CD8-positive, alpha-beta T cell (primary cell): ENCODE measurements at regions of chr7 and their contacts with region 1.

Region 1: GRCh38 chr7:150356265-150356897 is 12.2 kb upstream of the REPIN1 start:
- DNase-seq: peak in 2 of 9 experiments; percentile 73 to 79
- ATAC-seq: no peak
- H3K4me3 ChIP-seq: no peak overlapping the region
- H3K4me3 Mint-ChIP-seq: peak overlapping the region; percentile 18
- H3K27ac ChIP-seq: no peak overlapping the region
- H3K27ac Mint-ChIP-seq: peak overlapping the region; percentile 46
- H3K4me1 ChIP-seq: peaks cover 37% of the 10 kb centered on the region
- H3K4me1 Mint-ChIP-seq: peaks cover 39% of the 10 kb centered on the region
- H3K27me3 ChIP-seq: peaks cover 0 to 7% of the 10 kb centered on the region in 2 experiments
- H3K27me3 Mint-ChIP-seq: no peaks in the 10 kb centered on the region
- CTCF ChIP-seq: peak; percentile 78

Region 2: DNA sequence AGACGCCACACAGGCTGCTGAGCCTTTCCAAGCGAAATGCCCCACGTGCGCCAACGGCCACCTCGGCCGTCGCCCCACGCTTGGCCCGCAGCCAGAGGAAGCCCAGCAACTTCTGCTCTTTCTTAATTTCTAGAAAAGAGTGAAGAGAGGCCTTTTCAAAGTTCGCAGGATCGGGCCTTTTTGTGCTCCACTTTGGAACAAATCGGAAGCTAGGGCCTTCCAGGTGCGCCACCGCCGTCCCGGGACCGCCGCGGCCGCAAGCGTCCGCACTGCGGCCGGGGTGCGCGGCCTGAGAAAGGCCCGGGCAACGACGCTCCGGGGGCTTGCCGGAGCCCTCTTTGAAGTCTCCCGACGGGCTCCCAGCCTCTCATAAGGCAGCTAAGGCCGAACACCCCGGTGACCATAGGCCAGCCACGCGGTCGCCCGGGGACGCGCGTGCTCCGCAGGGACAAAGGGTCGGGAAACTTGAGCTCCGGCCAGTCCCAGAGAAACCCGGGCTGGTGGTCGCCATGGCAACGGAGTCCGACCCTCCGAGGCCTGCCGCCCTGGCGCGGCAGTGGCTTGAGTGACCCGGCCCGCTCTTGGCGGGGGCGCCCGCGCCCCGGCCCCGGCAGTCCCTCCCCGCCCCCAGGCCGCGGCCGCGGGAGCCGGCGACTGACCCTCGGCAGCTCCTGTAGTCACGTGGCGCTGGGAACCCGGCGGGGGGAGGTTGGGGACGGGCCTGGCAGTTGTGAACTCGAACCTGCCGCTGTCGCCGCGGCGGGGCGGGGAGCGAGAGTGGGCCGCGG is 11.9 kb after region 1 on chr7 and contains the start of gene REPIN1:
- CTCF ChIA-PET with region 1: interaction called, 31 read pairs
- POLR2A ChIA-PET with region 1: interaction called, 20 read pairs
- intact Hi-C with region 1: loop called (anchors 1 kb)
- DNase-seq: peak; percentile 52 to 90 (median 85)
- ATAC-seq: no peak
- H3K4me3 ChIP-seq: peak within 1 kb of the TSS; percentile 78 to 95
- H3K4me3 Mint-ChIP-seq: peak within 1 kb of the TSS; percentile 95
- H3K27ac ChIP-seq: peak within 1 kb of the TSS; percentile 53 to 73
- H3K27ac Mint-ChIP-seq: peak within 1 kb of the TSS; percentile 95
- H3K4me1 ChIP-seq: peaks cover 47% of the 10 kb centered on the region
- H3K4me1 Mint-ChIP-seq: peaks cover 58% of the 10 kb centered on the region
- H3K27me3 ChIP-seq: no peaks in the 10 kb centered on the region
- H3K27me3 Mint-ChIP-seq: no peaks in the 10 kb centered on the region
- CTCF ChIP-seq: no peak
- total RNA-seq, gene REPIN1: 54.0 to 54.1 TPM

Region 3: DNA sequence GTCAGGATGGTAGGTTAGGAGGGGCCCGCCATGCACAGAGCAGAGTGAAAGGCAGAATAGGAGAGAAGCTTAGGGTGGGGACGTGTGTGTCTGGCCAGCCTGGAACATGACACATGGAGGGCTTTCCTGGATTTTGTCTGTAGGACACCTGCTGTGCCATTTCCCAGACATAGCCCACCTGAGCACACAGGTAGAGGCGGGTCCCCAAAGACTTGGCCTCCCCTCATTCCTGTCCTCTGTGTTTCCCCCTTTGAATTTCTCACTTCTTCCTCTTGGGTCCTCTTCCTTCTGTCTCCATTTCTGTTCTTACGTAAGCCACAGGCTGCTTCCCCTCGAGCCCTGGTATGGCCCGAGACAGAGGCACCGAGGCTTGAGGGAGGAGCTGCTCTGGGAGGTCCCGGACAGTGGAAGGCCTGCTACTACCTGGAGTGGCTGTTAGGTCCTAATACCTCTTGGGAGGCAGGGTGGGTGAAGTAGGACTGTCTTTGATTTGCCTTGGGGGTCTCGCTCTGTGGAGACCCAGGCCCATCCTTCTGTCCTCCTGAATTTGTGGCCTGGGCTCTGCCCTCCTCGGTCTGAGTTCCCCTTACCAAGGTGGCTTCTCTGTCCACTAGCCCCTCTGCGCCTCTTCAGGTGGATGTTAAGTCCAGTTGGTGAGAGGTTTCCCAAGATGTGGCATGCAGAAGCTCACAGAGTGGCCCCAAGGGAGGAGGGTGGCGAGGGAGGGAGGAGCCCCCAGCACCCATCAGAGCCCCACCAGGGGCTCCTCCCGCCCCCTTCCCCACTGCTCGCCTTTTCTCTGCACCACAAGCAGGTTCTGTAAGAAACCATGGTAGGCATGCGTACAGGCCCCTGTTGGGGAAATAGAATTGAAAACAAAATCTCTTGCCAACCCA is 28.3 kb after region 1 on chr7:
- CTCF ChIA-PET with region 1: interaction called, 11 read pairs
- POLR2A ChIA-PET with region 1: no interaction called
- intact Hi-C with region 1: loop called in 1 of 2 experiments (anchors 1 kb)
- DNase-seq: no peak
- ATAC-seq: no peak
- H3K4me3 ChIP-seq: no peak overlapping the region
- H3K4me3 Mint-ChIP-seq: no peak overlapping the region
- H3K27ac ChIP-seq: no peak overlapping the region
- H3K27ac Mint-ChIP-seq: no peak overlapping the region
- H3K4me1 ChIP-seq: peaks cover 8% of the 10 kb centered on the region
- H3K4me1 Mint-ChIP-seq: peaks cover 18% of the 10 kb centered on the region
- H3K27me3 ChIP-seq: no peaks in the 10 kb centered on the region
- H3K27me3 Mint-ChIP-seq: no peaks in the 10 kb centered on the region
- CTCF ChIP-seq: no peak

Region 4: GRCh38 chr7:150404805-150405583 is 48.6 kb after region 1 on chr7:
- CTCF ChIA-PET with region 1: interaction called, 28 read pairs
- POLR2A ChIA-PET with region 1: interaction called, 8 read pairs
- intact Hi-C with region 1: loop called (anchors 1 kb)
- DNase-seq: peak; percentile 61 to 91 (median 76)
- ATAC-seq: peak; percentile 81
- H3K4me3 ChIP-seq: peak overlapping the region; percentile 86 to 88
- H3K4me3 Mint-ChIP-seq: peak overlapping the region; percentile 94
- H3K27ac ChIP-seq: peak overlapping the region; percentile 80 to 93
- H3K27ac Mint-ChIP-seq: peak overlapping the region; percentile 100
- H3K4me1 ChIP-seq: peaks cover 30% of the 10 kb centered on the region
- H3K4me1 Mint-ChIP-seq: peaks cover 39% of the 10 kb centered on the region
- H3K27me3 ChIP-seq: no peaks in the 10 kb centered on the region
- H3K27me3 Mint-ChIP-seq: no peaks in the 10 kb centered on the region
- CTCF ChIP-seq: no peak

Region 5: DNA sequence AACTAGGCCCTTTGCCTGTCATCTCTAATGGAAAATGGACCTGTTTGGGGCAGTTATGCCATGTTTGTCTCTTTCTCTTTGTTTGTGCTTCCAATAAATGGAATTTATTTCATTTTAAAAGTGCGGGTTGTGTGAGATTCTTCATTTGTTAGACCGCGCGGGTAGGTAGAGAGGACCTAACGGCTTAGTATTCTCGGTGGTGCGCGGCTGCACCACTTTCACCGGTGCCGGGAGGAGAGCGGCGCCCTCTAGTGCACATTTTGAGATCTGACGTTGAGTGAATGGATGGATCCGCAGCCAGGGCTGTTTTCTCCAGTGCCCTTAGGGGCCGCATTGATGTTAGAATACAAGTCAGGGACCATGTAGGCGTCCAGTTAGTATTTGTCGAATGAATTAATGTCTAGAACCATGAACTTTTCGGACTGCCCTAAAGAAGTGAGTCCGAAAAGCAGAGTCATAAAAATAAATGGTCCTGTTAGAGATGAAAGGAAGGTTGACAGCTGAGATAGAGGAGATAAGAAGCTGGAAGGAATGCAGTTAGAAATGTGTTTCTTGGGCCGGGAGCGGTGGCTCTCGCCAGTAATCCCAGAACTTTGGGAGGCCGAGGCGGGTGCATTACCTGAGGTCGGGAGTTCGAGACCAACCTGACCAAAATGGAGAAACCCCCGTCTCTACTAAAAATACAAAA is 64.8 kb after region 1 on chr7:
- CTCF ChIA-PET with region 1: interaction called, 29 read pairs
- POLR2A ChIA-PET with region 1: no interaction called
- intact Hi-C with region 1: loop called (anchors 1 kb)
- DNase-seq: peak; percentile 75 to 93 (median 88)
- ATAC-seq: peak; percentile 99
- H3K4me3 ChIP-seq: no peak overlapping the region
- H3K4me3 Mint-ChIP-seq: no peak overlapping the region
- H3K27ac ChIP-seq: no peak overlapping the region
- H3K27ac Mint-ChIP-seq: no peak overlapping the region
- H3K4me1 ChIP-seq: peaks cover 4% of the 10 kb centered on the region
- H3K4me1 Mint-ChIP-seq: peaks cover 5% of the 10 kb centered on the region
- H3K27me3 ChIP-seq: no peaks in the 10 kb centered on the region
- H3K27me3 Mint-ChIP-seq: no peaks in the 10 kb centered on the region
- CTCF ChIP-seq: peak; percentile 91

Region 6: GRCh38 chr7:150502519-150502918 is 146.1 kb after region 1 on chr7:
- CTCF ChIA-PET with region 1: no interaction called
- POLR2A ChIA-PET with region 1: no interaction called
- intact Hi-C with region 1: loop called in 1 of 2 experiments (anchors 5 kb)
- DNase-seq: peak in 5 of 9 experiments; percentile 29 to 77 (median 61)
- ATAC-seq: peak; percentile 92
- H3K4me3 ChIP-seq: peak overlapping the region in 1 of 2 experiments; percentile 27
- H3K4me3 Mint-ChIP-seq: peak overlapping the region; percentile 23
- H3K27ac ChIP-seq: peak overlapping the region; percentile 22 to 61
- H3K27ac Mint-ChIP-seq: peak overlapping the region; percentile 86
- H3K4me1 ChIP-seq: peaks cover 46% of the 10 kb centered on the region
- H3K4me1 Mint-ChIP-seq: peaks cover 78% of the 10 kb centered on the region
- H3K27me3 ChIP-seq: no peaks in the 10 kb centered on the region
- H3K27me3 Mint-ChIP-seq: no peaks in the 10 kb centered on the region
- CTCF ChIP-seq: no peak